CD8-positive, alpha-beta T cell (primary cell): ENCODE measurements at regions of chr12 and their contacts with region 1.

Region 1: DNA sequence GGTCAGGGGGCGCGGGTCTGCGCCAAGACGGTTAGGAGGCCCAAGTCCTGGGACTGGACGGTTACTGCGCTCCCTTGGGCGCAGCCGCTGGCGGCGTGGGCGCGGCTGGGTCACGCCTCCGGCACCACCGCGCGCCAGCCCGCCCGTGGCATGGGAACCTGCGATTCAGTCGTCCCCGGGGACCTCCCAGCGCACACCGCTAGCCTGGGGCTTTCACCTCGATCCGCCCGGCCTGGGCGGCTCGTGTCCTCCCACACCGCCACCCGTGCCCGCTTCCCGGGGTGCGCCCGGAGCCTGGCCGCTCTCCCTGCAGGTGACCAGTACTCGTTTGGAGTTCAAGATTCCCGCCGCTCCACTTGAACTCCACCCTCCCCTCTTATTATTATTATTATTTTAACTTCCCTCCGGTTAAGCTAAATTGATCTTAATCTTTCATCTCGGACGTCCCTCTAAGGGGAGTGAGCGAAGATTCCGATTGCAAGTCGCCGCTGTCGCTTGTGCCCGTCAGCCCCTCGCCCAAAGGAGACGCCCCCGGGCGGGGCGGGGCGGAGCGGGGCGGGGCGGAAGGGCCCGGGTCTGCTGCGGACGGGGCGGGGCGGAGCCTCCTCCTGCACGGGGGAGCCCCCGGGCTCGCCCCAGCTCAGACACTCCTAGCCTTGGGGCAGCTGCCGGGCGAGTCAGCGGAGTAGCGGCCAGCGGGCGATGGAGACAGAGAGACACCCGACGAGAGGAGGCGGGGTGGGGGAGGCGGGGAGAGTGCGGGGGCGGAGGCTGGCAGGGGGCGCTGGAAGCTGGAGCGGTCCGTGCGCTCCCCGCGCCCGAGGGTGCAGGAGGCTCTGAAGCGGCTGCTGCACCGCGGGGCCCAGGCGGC is at the start of gene KCNMB4:
- DNase-seq: peak; percentile 16 to 81 (median 67)
- ATAC-seq: peak; percentile 70
- H3K4me3 ChIP-seq: peak within 1 kb of the TSS; percentile 72 to 79
- H3K4me3 Mint-ChIP-seq: peak within 1 kb of the TSS; percentile 95
- H3K27ac ChIP-seq: peak within 1 kb of the TSS in 1 of 2 experiments; percentile 34
- H3K27ac Mint-ChIP-seq: peak within 1 kb of the TSS; percentile 91
- H3K4me1 ChIP-seq: peaks cover 22% of the 10 kb centered on the region
- H3K4me1 Mint-ChIP-seq: peaks cover 31% of the 10 kb centered on the region
- H3K27me3 ChIP-seq: no peaks in the 10 kb centered on the region
- H3K27me3 Mint-ChIP-seq: no peaks in the 10 kb centered on the region
- CTCF ChIP-seq: no peak
- total RNA-seq, gene KCNMB4: 0.73 to 1.4 TPM

Region 2: GRCh38 chr12:69738351-69739286 is 627.3 kb before region 1 on chr12 and contains the start of gene RAB3IP:
- CTCF ChIA-PET with region 1: no interaction called
- POLR2A ChIA-PET with region 1: no interaction called
- intact Hi-C with region 1: loop called (anchors 2 kb)
- DNase-seq: peak; percentile 84 to 95 (median 93)
- ATAC-seq: peak; percentile 87
- H3K4me3 ChIP-seq: peak within 1 kb of the TSS; percentile 64 to 79
- H3K4me3 Mint-ChIP-seq: peak within 1 kb of the TSS; percentile 82
- H3K27ac ChIP-seq: peak within 1 kb of the TSS; percentile 73
- H3K27ac Mint-ChIP-seq: peak within 1 kb of the TSS; percentile 69
- H3K4me1 ChIP-seq: peaks cover 11% of the 10 kb centered on the region
- H3K4me1 Mint-ChIP-seq: peaks cover 24% of the 10 kb centered on the region
- H3K27me3 ChIP-seq: no peaks in the 10 kb centered on the region
- H3K27me3 Mint-ChIP-seq: peaks cover 4% of the 10 kb centered on the region
- CTCF ChIP-seq: peak; percentile 89
- total RNA-seq, gene RAB3IP: 14.8 to 15.1 TPM

Region 3: DNA sequence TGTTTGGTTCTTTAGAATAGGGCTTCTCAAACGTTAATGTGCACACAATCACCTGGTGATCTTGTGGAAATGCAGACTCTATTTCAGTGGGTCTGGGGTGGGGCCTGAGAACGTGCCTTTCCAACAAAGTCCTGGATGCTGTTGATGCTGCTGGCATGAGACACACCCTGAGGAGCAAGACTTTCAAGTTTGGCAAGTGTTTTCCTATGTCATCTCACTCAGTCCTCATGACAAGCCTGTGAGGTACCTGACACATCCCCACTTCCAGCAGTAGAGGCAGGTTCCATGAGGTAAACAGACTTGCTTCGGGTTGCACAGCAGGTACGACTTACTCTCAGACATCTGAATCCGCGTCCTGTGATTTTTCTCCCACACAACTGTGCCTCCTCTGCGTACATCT is 393.7 kb before region 1 on chr12:
- CTCF ChIA-PET with region 1: no interaction called
- POLR2A ChIA-PET with region 1: no interaction called
- intact Hi-C with region 1: no loop called
- DNase-seq: no peak
- ATAC-seq: no peak
- H3K4me3 ChIP-seq: no peak overlapping the region
- H3K4me3 Mint-ChIP-seq: no peak overlapping the region
- H3K27ac ChIP-seq: no peak overlapping the region
- H3K27ac Mint-ChIP-seq: no peak overlapping the region
- H3K4me1 ChIP-seq: no peaks in the 10 kb centered on the region
- H3K4me1 Mint-ChIP-seq: no peaks in the 10 kb centered on the region
- H3K27me3 ChIP-seq: no peaks in the 10 kb centered on the region
- H3K27me3 Mint-ChIP-seq: no peaks in the 10 kb centered on the region
- CTCF ChIP-seq: no peak

Region 4: GRCh38 chr12:70353780-70354660 is 11.9 kb before region 1 on chr12:
- CTCF ChIA-PET with region 1: interaction called, 3 read pairs
- POLR2A ChIA-PET with region 1: interaction called, 4 read pairs
- intact Hi-C with region 1: loop called in 1 of 2 experiments (anchors 1 kb)
- DNase-seq: no peak
- ATAC-seq: no peak
- H3K4me3 ChIP-seq: no peak overlapping the region
- H3K4me3 Mint-ChIP-seq: no peak overlapping the region
- H3K27ac ChIP-seq: no peak overlapping the region
- H3K27ac Mint-ChIP-seq: no peak overlapping the region
- H3K4me1 ChIP-seq: peaks cover 6% of the 10 kb centered on the region
- H3K4me1 Mint-ChIP-seq: peaks cover 18% of the 10 kb centered on the region
- H3K27me3 ChIP-seq: no peaks in the 10 kb centered on the region
- H3K27me3 Mint-ChIP-seq: no peaks in the 10 kb centered on the region
- CTCF ChIP-seq: no peak

Region 5: DNA sequence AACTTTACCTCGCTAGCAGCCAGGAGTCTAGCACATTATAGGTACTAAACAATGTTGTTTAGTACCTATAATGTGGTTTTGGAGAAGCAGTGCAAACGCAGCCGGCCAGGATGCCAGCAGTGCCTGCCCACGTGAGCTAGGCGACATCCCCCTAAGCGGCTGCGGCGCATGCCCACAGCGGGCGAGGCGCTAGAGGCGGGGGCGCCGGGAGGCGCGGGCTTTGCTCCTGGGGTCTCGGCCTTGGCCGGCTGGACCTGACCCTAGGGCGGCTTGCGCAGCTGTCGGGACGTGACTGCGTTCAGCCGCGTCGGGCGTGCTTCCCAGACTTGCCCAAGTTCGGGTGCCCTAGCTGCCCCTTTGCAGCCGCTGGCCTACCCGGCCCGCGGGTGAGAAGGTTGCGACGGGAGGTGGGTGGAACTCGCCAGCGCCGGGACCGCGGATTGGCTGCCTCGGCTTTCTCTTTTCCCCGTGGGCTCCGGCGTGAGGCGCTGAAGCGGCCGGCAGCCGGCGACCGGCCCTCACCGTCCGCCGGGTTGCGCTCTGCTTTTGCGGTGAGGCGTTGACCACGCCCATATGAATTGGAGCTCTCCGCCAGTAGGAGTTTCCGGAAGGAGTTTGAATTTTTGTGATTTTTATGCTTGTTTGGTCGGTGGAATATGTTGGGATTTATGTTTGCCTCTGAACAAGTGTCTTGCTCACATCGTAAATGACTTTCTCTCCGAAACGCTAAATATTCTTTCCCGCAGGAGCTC is 1320.2 kb after region 1 on chr12 and contains the start of gene TMEM19:
- CTCF ChIA-PET with region 1: no interaction called
- POLR2A ChIA-PET with region 1: no interaction called
- intact Hi-C with region 1: loop called in 1 of 2 experiments (anchors 5 kb)
- DNase-seq: peak; percentile 65 to 92 (median 83)
- ATAC-seq: peak; percentile 88
- H3K4me3 ChIP-seq: peak within 1 kb of the TSS; percentile 66 to 95
- H3K4me3 Mint-ChIP-seq: peak within 1 kb of the TSS; percentile 96
- H3K27ac ChIP-seq: peak within 1 kb of the TSS; percentile 71 to 74
- H3K27ac Mint-ChIP-seq: peak within 1 kb of the TSS; percentile 94
- H3K4me1 ChIP-seq: peaks cover 33% of the 10 kb centered on the region
- H3K4me1 Mint-ChIP-seq: peaks cover 45% of the 10 kb centered on the region
- H3K27me3 ChIP-seq: no peaks in the 10 kb centered on the region
- H3K27me3 Mint-ChIP-seq: no peaks in the 10 kb centered on the region
- CTCF ChIP-seq: no peak
- total RNA-seq, gene TMEM19: 8.8 to 10.0 TPM